ENCODE measurements at regions of chr2 and their contacts with region 1.

Region 1: DNA sequence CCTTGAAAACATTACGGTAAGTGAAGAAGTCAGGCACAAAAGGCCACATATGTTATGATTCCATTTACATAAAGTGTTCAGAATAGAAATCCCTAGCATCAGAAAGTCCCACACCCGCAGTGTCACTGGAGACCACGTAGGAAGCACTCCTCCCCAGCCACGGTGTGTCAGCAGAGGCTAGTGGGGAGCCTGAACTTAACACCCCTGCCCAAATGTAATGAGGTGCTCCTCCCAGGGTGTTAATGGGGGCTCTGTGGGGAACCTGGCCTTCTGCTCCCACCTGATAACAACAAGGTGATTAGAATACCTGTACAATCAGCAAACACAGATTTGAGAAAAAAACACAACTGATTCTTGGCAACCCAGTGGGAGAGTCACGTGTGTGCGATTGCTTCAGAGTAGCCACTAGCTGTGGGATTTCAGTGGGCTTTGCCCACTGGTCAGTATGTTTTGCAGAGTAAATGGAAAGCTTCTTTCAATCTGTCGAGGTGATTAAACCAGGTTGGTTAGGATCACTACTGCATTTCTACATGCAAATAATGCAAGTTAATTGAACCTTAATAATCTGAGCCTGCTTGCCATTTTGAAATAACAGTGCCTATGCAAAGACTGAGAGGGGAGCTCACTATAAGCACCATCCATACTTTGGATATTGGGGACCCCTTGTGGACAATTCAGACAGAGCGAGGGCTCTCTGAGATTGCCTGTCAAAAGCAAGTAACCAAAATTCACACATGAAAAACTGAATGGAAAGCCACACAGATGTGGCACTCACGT is 20.6 kb upstream of the ATRAID start:
- DNase-seq: peak; percentile 57
- H3K27ac ChIP-seq: no peak overlapping the region
- CTCF ChIP-seq: peak; percentile 65

Region 2: GRCh38 chr2:27099334-27099955 is 91.8 kb before region 1 on chr2:
- CTCF ChIA-PET with region 1: interaction called, 14 read pairs
- POLR2A ChIA-PET with region 1: no interaction called
- DNase-seq: no peak
- H3K27ac ChIP-seq: no peak overlapping the region
- CTCF ChIP-seq: no peak

Measured in RWPE1 (cell line).